Left lung (tissue), 14 donors: ENCODE measurements at regions of chr10 and their contacts with region 1.

Region 1: DNA sequence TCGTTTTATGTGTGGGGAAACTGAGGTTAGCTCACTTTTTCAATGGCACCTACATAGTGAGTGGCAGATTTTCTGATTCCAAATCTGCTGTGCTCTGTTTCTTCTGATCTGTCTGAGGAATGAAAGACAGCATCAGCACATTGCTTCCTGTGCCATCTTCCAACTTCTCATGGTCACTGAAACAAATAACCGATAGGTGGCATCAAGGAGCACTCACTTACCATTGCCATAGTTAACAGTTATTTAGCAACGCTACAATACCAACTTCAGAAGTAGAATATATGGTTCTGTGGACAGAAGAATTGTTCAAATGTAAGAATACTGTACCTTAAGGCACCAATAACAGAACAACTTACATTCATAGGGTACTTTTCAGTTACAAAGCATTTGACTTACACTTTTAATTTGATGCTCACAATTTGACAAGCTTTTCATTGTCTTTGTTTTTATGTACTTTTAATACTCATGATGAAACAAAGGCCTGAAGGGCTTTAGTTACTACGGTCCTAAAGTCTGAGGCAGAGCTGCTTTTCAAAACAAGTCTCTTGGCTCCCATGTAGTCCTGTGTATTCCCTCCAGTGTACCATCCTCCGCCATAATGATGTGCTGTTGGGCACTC is 228.9 kb upstream of the TCF7L2 start:
- DNase-seq: peak in 1 of 4 donors; percentile 41
- ATAC-seq: peak; percentile 79
- H3K4me3 ChIP-seq: no peak overlapping the region
- H3K27ac ChIP-seq: no peak overlapping the region
- H3K4me1 ChIP-seq: no peaks in the 10 kb centered on the region
- H3K27me3 ChIP-seq: no peaks in the 10 kb centered on the region
- CTCF ChIP-seq: peak; percentile 42 to 58

Region 2: DNA sequence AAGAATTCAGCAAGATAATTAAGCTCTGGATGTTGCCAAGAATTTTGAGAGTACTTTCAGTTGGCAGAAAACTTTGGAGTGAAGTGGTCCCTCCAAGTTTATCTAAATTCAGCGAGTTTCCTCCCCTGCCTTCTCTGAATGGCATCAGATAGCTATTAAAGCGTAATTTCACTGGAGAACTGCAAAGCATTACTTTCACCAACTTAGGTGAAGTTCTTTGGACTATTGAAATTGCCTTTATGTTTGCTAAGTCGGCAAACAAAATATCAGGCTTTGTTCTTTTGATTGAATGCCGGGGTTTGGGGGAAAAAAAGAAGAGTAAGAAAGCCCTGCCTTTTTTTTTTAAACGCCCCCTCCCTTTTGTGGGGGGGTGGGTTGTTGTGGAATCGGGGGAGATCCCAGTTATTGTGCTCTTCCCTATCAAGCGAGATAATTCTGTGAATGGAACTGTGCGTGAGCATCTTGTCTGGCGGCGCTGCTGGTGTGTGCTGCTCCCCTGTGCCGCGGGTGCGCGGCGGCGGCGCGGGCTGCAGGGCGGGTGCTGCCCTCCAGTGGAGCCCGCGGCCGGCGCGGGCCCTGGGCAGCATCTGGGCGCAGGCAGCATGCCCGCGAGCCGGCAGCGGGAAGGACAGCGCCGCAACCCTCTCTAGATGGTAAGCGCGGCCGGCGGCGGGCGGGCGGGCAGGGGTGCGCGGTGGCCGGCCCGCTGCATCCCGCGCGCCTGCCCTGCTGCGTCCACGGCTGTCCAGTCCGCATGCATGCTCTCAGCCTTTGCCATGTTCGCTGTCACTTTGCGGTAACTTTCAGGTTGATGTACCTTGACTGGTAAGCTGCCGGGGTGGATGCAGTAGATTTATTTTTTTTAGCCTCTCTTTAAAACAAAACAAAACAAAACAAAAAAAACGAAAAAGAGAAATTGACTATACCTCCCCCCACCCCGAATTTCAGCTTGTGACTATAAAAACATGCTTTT is 405.3 kb after region 1 on chr10:
- intact Hi-C with region 1: loop called in 1 of 2 experiments (anchors 10 kb)
- DNase-seq: peak; percentile 59 to 94 (median 73)
- ATAC-seq: peak; percentile 100
- H3K4me3 ChIP-seq: peak overlapping the region; percentile 12 to 13
- H3K27ac ChIP-seq: no peak overlapping the region
- H3K4me1 ChIP-seq: peaks cover 0 to 23% of the 10 kb centered on the region in 2 donors
- H3K27me3 ChIP-seq: peaks cover 0 to 16% of the 10 kb centered on the region in 2 donors
- CTCF ChIP-seq: peak; percentile 63 to 75